ENCODE measurements at regions of chr12 and their contacts with region 1.

Region 1: DNA sequence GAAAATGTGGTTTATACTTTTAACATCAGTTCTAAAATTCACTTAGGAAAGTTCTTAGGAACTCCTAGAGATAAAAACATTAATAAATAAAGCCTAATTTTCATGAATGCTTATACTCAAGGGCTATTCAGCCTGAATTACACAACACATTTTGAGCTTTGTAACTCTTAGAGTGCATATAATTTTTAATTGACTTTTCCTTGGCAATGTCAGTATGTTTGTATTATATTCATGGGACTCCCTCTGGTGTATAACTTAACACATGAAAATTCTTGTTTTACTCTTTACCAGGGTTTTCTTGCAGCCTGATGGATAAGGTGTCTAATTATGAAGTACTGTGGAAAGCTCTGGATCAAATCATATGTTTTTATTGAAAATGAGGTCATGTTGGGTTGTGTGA is 150.6 kb upstream of the HMGA2 start:
- DNase-seq: no peak
- ATAC-seq: no peak

Region 2: GRCh38 chr12:65372574-65372973 is 301.2 kb before region 1 on chr12:
- intact Hi-C with region 1: no loop called
- DNase-seq: no peak
- ATAC-seq: no peak

Region 3: DNA sequence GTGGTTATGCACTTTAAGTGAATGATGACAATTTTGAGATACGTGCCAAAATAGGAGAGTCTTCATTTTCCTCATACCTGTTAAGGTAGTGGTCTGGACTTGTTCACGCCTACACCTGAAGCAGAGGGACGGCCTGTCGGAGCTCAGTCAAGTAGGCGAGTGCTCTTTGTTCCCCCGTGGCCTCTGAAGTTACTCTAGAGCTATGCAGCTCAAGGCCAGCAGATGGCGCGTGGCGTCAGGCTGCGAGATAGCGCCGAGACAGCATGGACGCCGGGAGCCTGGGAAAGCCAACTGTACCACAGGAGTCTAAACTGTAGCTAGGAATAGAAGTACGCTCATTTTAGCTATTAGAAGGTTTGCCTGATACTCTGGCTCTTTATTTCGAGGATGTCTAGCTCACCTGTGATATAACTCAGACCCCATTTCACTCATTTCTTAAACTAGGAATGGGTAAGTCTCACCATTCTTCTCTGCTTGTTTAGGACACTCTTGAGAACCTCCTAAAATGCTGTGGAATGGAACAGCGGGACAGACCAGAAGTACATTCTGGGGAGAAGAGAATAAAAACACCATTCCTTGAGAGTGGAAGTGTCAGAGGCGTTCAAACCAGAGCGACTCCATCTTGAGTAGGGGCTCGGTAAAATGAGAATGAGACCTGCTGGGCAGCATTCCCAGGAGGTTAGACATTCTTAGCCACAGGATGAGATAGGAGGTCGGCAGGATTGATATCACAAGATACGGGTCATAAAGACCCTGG is 116.9 kb before region 1 on chr12:
- intact Hi-C with region 1: loop called (anchors 5 kb)
- DNase-seq: peak; percentile 84
- ATAC-seq: peak; percentile 98

Region 4: GRCh38 chr12:65596514-65597091 is 77.1 kb before region 1 on chr12:
- intact Hi-C with region 1: no loop called
- DNase-seq: no peak
- ATAC-seq: no peak

Measured in left cardiac atrium (tissue), 4 donors.